ENCODE measurements at regions of chr5 and their contacts with region 1.

Region 1: DNA sequence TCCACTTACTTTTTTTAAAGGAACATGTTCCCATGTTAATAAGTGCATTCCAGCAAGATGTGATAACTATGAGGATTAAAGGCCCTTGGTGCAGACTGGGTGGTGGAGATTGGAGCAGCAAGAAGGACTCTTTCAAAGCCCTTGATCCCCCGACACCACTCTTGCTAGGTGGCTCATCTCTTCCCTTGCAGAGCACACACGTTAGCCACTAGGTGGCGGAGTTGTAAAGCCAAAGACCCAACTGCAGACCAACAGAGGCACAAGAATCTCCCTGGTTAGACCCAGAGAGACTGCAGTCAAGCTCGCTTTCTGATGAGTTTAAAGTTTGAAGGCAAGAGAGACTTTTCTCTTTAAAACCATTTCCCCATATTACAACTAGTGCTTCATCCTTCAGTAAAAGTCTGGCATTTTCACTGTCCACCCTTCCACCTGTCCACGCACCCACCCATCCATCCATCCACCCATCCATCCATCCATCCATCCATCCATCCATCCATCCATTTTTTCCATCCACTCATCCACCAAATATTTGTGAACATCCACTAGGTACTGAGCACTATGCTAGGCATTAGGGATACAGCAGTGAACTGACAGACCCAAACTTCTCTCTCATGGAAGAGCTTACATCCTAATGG is 226.9 kb downstream of the MSX2 start:
- DNase-seq: peak; percentile 58 to 64 (median 62)
- ATAC-seq: peak; percentile 60
- H3K4me3 ChIP-seq: no peak overlapping the region
- H3K27ac ChIP-seq: no peak overlapping the region
- H3K4me1 ChIP-seq: no peaks in the 10 kb centered on the region
- H3K27me3 ChIP-seq: no peaks in the 10 kb centered on the region
- CTCF ChIP-seq: peak; percentile 75 to 89 (median 79)
- POLR2A ChIP-seq: no peak

Region 2: DNA sequence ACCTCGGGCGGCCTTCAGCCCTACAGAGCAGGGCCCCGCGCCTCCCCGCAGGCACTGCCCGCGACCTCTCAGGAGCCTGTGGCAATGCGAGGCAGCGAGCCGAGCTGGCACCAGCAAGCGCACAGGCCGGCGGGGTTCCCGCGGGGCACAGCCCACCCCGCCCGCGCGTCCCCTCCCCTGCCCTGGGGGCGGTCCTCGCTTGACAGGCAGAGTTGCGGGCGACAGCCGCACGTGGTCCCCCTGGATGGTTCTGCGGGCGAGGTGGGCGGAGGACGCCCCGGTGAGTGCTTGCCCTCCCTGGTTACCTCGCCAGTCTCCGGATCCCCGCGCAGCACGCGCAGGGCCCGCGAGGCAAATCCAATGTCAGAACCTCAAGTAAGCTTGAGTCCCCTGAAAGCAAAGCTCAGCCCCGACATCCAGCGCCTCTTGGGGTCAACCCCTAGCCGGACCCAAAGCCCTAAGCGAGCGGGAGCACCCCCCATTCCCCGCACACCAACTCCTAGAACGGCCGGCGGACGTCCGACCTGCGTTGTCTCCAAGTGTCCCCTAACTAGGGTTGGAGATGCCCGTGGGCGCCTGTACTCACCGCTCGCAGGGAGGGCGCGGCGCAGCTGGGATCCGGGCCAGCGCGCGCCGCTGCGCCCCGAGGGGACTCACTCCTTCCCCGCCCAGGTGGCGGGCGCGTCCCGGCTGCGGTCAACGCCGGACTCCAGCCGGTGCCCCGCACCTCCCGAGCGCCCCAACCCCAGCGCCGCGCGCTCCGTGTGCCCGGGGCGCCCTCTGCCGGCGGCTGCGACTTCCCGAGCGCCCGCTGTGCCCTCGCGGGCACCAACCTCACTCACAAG is 493.0 kb after region 1 on chr5 and contains the start of gene DRD1:
- intact Hi-C with region 1: loop called (anchors 5 kb)
- DNase-seq: peak; percentile 16 to 62 (median 42)
- ATAC-seq: peak; percentile 47
- H3K4me3 ChIP-seq: peak within 1 kb of the TSS in 1 of 2 donors; percentile 12
- H3K27ac ChIP-seq: no peak within 1 kb of the TSS
- H3K4me1 ChIP-seq: peaks cover 14% of the 10 kb centered on the region
- H3K27me3 ChIP-seq: peaks cover 0 to 6% of the 10 kb centered on the region in 2 donors
- CTCF ChIP-seq: peak in 6 of 7 experiments; percentile 37 to 82 (median 70)
- POLR2A ChIP-seq: no peak
- total RNA-seq, gene DRD1: not detected

Measured in body of pancreas (tissue), 4 donors.